ENCODE measurements at regions of chr5 and their contacts with region 1.

Region 1: DNA sequence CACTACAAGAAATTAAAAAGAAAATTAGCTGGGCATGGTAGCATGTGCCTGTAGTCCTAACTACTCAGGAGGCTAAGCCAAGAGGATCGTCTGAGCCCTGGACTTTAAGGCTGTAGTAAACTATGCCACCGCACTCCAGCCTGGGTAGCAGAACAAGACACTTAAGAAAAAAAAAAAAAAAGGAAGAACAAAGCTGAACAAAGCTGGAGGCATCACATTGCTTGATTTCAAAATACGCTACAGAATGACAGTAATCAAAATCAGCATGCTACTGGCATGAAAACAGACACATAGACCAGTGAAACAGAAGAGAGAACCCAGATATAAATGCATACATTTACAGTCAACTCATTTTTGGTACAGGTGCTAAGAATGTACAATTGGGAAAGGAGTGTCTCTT is 14.5 kb upstream of the OTULIN start:
- DNase-seq: no peak
- ATAC-seq: no peak
- H3K4me3 Mint-ChIP-seq: no peak overlapping the region
- H3K27ac Mint-ChIP-seq: no peak overlapping the region
- H3K4me1 Mint-ChIP-seq: peaks cover 1% of the 10 kb centered on the region
- H3K27me3 Mint-ChIP-seq: peaks cover 15% of the 10 kb centered on the region
- CTCF ChIP-seq: no peak

Region 2: DNA sequence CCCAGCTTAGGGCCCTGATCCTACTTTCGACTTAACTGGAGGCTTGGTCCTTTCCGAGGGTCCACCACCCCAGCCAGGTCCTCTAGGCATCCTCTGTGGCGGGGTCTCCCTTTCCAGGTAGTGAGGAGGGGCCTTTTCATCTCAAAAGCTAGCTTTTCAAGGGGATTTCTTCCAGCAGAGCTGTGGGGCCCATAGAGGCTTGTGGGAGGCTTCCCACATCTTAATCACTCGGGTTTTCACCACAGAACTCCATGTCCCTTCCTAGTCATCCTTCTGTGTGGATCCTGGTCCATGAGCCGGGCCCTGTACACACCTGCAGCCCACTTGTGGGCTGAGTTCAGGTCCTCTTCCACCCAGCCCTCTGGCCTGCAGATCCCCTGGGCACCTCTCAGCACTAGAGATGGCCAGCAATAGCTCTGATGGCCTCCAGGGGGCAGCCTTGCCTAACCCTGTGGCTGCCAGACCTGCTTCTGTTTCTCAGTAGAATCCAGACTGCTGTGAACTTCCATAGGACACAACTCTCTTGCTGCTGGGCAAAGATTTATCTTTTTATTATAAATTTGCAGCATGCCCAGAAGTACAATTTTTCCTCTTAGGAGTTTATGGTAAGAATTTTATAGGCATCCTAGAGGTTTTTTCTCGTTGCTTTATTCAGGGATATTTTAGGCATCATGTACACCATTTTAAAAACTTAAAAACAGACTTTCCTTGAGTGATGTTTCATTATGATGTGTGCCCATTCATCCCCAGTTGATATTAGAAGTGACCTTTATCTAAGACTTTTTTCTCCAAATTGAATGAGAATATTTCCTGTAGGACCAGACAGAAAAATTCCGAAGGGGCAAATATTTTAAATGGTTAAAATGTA is 298.0 kb before region 1 on chr5:
- CTCF ChIA-PET with region 1: interaction called, 50 read pairs
- POLR2A ChIA-PET with region 1: no interaction called
- intact Hi-C with region 1: no loop called
- DNase-seq: peak; percentile 71
- ATAC-seq: peak; percentile 99
- H3K4me3 Mint-ChIP-seq: no peak overlapping the region
- H3K27ac Mint-ChIP-seq: no peak overlapping the region
- H3K4me1 Mint-ChIP-seq: no peaks in the 10 kb centered on the region
- H3K27me3 Mint-ChIP-seq: peaks cover 1% of the 10 kb centered on the region
- CTCF ChIP-seq: peak; percentile 84

Region 3: GRCh38 chr5:14581333-14581890 is 68.6 kb before region 1 on chr5 and contains the start of gene OTULINL:
- CTCF ChIA-PET with region 1: interaction called, 32 read pairs
- POLR2A ChIA-PET with region 1: interaction called, 3 read pairs
- intact Hi-C with region 1: no loop called
- DNase-seq: peak; percentile 90
- ATAC-seq: peak; percentile 96
- H3K4me3 Mint-ChIP-seq: peak within 1 kb of the TSS; percentile 79
- H3K27ac Mint-ChIP-seq: peak within 1 kb of the TSS; percentile 75
- H3K4me1 Mint-ChIP-seq: peaks cover 41% of the 10 kb centered on the region
- H3K27me3 Mint-ChIP-seq: peaks cover 10% of the 10 kb centered on the region
- CTCF ChIP-seq: no peak
- total RNA-seq, gene OTULINL: 19.7 to 21.1 TPM

Region 4: DNA sequence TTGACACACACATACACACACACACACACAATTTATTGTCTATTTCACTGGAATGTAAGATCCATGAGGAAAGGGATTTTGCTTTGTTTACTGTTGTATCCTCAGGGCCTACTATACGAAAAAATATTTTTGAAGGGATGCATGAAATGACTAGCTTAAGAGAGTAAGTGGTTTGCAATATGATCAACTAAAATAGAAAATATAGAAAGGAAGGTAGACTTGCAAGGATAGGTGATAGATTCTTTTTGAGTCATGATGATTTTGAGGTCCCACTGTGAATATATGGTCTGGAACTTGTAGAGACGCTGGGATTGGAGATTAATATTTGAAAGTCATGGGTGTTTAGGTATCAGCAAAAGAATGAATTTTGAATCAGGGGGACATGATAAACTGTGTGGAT is 14.4 kb before region 1 on chr5:
- CTCF ChIA-PET with region 1: interaction called, 20 read pairs
- POLR2A ChIA-PET with region 1: no interaction called
- intact Hi-C with region 1: no loop called
- DNase-seq: no peak
- ATAC-seq: peak; percentile 17
- H3K4me3 Mint-ChIP-seq: no peak overlapping the region
- H3K27ac Mint-ChIP-seq: no peak overlapping the region
- H3K4me1 Mint-ChIP-seq: peaks cover 3% of the 10 kb centered on the region
- H3K27me3 Mint-ChIP-seq: no peaks in the 10 kb centered on the region
- CTCF ChIP-seq: no peak

Region 5: GRCh38 chr5:14693070-14693469 is 43.0 kb after region 1 on chr5:
- CTCF ChIA-PET with region 1: no interaction called
- POLR2A ChIA-PET with region 1: no interaction called
- intact Hi-C with region 1: no loop called
- DNase-seq: no peak
- ATAC-seq: no peak
- H3K4me3 Mint-ChIP-seq: no peak overlapping the region
- H3K27ac Mint-ChIP-seq: no peak overlapping the region
- H3K4me1 Mint-ChIP-seq: peaks cover 8% of the 10 kb centered on the region
- H3K27me3 Mint-ChIP-seq: no peaks in the 10 kb centered on the region
- CTCF ChIP-seq: no peak

Region 6: DNA sequence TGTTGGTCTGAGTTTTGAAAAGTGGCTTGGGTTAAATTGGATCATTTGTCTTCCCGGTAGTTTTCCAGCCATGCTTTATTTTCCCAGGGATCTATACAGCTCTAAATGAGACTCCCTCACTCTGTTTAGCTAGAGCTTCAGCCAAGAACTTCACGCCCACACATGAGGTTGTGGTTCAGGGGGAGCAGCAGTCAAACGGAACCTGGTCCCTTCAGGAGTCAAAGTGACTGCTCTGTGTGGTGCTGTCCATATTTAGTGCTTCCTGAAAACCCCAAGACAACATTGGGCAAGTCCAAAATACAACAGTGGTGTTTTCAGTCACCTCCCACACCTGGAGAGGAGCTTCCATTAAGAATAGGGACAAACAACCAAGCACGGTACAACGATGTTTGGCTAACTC is 131.1 kb after region 1 on chr5:
- CTCF ChIA-PET with region 1: no interaction called
- POLR2A ChIA-PET with region 1: no interaction called
- intact Hi-C with region 1: no loop called
- DNase-seq: peak; percentile 59
- ATAC-seq: peak; percentile 55
- H3K4me3 Mint-ChIP-seq: no peak overlapping the region
- H3K27ac Mint-ChIP-seq: no peak overlapping the region
- H3K4me1 Mint-ChIP-seq: peaks cover 39% of the 10 kb centered on the region
- H3K27me3 Mint-ChIP-seq: no peaks in the 10 kb centered on the region
- CTCF ChIP-seq: no peak

Region 7: DNA sequence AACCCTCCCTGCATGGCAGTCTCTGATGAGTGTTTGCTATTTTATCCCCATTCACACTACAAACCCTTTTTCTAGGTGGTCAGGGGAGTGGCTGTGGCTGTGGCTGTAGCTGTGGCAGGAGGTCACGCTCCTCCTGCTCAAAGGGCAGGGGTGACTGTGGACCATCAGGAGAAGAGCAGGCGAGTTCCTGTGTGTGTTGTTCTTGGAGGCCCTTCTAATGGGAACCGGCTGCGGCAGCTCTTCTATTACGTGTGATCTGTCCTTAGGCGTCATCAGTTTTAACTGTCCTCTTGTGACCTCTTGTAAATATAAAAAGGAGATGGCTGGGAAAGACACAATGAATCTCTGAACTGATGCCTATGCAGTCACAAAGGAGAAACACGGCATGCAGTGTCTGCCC is 156.4 kb after region 1 on chr5:
- CTCF ChIA-PET with region 1: no interaction called
- POLR2A ChIA-PET with region 1: no interaction called
- intact Hi-C with region 1: no loop called
- DNase-seq: no peak
- ATAC-seq: no peak
- H3K4me3 Mint-ChIP-seq: no peak overlapping the region
- H3K27ac Mint-ChIP-seq: no peak overlapping the region
- H3K4me1 Mint-ChIP-seq: peaks cover 54% of the 10 kb centered on the region
- H3K27me3 Mint-ChIP-seq: no peaks in the 10 kb centered on the region
- CTCF ChIP-seq: no peak

Measured in activated CD8-positive, alpha-beta T cell treated with anti-CD3 and anti-CD28 coated beads for 36 hours (primary cell).